ENCODE measurements at regions of chr13 and their contacts with region 1.

Region 1: DNA sequence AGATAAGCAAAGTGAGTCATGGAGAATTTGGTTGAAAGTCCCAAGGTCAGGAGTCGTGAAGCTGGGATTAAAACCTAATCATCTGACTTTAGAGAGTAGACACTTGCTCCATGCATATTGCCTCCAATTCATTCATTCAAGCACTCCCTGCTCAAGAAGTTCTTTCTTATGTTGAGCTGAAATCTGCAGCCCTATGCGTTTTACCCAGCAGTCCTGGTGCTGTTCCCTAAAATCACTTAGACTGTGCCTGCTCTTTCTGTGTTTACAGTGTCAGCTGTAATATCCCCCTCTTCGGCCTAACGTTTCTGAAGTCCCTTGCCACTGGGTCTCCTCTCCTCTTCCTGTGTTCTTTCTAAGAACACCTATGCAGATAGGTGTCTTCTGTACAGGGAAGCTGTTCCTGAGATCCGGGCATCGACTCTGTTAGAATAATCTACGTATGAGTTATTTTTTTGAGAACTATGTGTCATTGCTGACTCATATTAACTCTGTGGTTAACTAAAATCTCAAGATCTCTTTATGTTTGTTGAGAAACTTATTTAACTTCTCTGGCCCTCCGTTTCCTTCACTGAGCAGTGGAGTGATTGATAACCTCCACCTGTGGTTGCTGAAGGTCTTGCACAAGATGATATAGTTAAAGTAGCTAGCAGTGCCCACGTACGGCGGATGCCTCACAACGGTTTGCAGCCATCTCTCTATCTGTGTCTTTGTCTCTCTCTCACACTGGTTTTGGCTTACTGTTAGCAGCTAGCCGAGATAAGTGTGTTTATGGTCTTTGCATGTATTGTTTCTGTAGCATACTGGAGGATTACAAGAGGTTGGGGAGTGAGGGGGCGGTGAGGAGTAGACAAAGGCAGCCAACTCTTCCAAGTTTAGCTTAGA is 4.7 kb downstream of the ALOX5AP start:
- DNase-seq: peak; percentile 76
- ATAC-seq: peak; percentile 54
- H3K4me3 ChIP-seq: peak overlapping the region; percentile 42
- H3K27ac ChIP-seq: no peak overlapping the region
- H3K4me1 ChIP-seq: peaks cover 60% of the 10 kb centered on the region
- H3K27me3 ChIP-seq: no peaks in the 10 kb centered on the region
- CTCF ChIP-seq: no peak
- EP300 ChIP-seq: peak in 1 of 2 experiments; percentile 39; a peak in 2 of 4 replicates
- POLR2A ChIP-seq: no peak
- RAD21 ChIP-seq: peak; percentile 32; the same call in 1 of the 2 replicates

Region 2: DNA sequence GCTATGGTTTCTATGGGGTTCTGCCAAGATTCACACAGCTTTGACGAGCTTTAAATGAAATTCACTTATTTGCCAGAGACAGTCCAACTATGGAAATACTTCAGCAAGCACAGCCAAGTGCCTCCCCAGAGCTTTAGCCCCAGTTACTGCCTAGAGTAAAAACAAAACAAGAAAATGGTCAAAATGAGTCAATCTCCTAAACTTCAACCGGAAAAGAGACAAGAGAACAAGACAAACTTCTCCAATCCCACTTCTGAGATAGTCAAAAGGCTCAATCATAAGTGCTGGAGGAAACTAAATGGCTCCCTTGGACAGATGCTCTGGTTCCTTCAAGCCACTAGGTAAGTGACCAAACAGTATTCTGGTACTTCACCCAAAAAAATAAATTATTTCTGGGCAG is 498.5 kb before region 1 on chr13:
- CTCF ChIA-PET with region 1: no interaction called
- POLR2A ChIA-PET with region 1: no interaction called
- RAD21 ChIA-PET with region 1: no interaction called
- SMC1A ChIA-PET with region 1: no interaction called
- in situ Hi-C with region 1: no loop called
- intact Hi-C with region 1: no loop called
- DNase-seq: peak; percentile 56
- ATAC-seq: peak; percentile 93
- H3K4me3 ChIP-seq: no peak overlapping the region
- H3K27ac ChIP-seq: no peak overlapping the region
- H3K4me1 ChIP-seq: peaks cover 2% of the 10 kb centered on the region; the same call in 1 of the 2 replicates
- H3K27me3 ChIP-seq: no peaks in the 10 kb centered on the region
- CTCF ChIP-seq: no peak
- EP300 ChIP-seq: peak in 1 of 2 experiments; percentile 60; a peak in 1 of 4 replicates
- POLR2A ChIP-seq: no peak
- RAD21 ChIP-seq: no peak; the same call in 1 of the 2 replicates

Region 3: GRCh38 chr13:30408319-30409101 is 331.5 kb before region 1 on chr13:
- CTCF ChIA-PET with region 1: no interaction called
- POLR2A ChIA-PET with region 1: no interaction called
- RAD21 ChIA-PET with region 1: no interaction called
- SMC1A ChIA-PET with region 1: no interaction called
- in situ Hi-C with region 1: no loop called
- intact Hi-C with region 1: no loop called
- DNase-seq: no peak
- ATAC-seq: peak; percentile 97
- H3K4me3 ChIP-seq: no peak overlapping the region; the same call in 1 of the 2 replicates
- H3K27ac ChIP-seq: no peak overlapping the region
- H3K4me1 ChIP-seq: peaks cover 6% of the 10 kb centered on the region
- H3K27me3 ChIP-seq: no peaks in the 10 kb centered on the region
- CTCF ChIP-seq: peak; percentile 56 to 86 (median 74)
- EP300 ChIP-seq: 0 out of 4 replicates have a peak, but pooled peaks of 1 of the 2 experiments have one; percentile 22
- POLR2A ChIP-seq: peak; percentile 62
- RAD21 ChIP-seq: peak; percentile 72

Region 4: GRCh38 chr13:30617315-30618185 is 122.5 kb before region 1 on chr13 and contains the start of gene USPL1:
- CTCF ChIA-PET with region 1: no interaction called
- POLR2A ChIA-PET with region 1: interaction called, 6 read pairs
- RAD21 ChIA-PET with region 1: interaction called, 16 read pairs
- SMC1A ChIA-PET with region 1: interaction called, 6 read pairs
- in situ Hi-C with region 1: no loop called
- intact Hi-C with region 1: loop called (anchors 2 kb)
- DNase-seq: peak; percentile 96
- ATAC-seq: peak; percentile 91
- H3K4me3 ChIP-seq: peak within 1 kb of the TSS; percentile 91
- H3K27ac ChIP-seq: peak within 1 kb of the TSS; percentile 93
- H3K4me1 ChIP-seq: peaks cover 8% of the 10 kb centered on the region
- H3K27me3 ChIP-seq: no peaks in the 10 kb centered on the region
- CTCF ChIP-seq: peak in 1 of 3 experiments; percentile 6; a peak in 1 of 6 replicates
- EP300 ChIP-seq: peak; percentile 84 to 95
- POLR2A ChIP-seq: peak; percentile 93
- RAD21 ChIP-seq: peak; percentile 17; the same call in 1 of the 2 replicates
- polyA plus RNA-seq, gene USPL1: 7.9 to 8.0 TPM

Region 5: DNA sequence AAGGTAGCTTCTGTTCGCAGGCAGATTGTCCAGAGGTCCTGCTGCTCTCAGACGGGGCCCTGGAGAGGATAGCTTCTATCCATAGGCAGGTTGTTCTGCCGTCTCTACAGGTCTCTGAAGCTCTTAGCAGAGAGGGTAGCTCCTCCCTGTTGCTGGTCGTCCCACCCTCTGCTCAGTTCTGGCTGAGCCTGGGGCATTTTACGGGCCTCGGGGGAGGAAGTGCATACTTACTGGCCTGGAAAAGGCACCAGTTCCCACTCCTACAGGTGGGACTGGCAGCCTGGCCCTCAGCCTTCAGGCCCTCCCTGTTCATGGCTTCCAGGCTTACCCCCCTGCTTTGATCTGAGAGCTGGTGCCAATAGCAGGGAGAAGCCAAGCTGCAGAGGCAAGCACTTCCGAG is 80.0 kb before region 1 on chr13:
- CTCF ChIA-PET with region 1: no interaction called
- POLR2A ChIA-PET with region 1: no interaction called
- RAD21 ChIA-PET with region 1: interaction called, 7 read pairs
- SMC1A ChIA-PET with region 1: interaction called, 3 read pairs
- in situ Hi-C with region 1: no loop called
- intact Hi-C with region 1: loop called (anchors 1 kb)
- DNase-seq: no peak
- ATAC-seq: no peak
- H3K4me3 ChIP-seq: no peak overlapping the region
- H3K27ac ChIP-seq: no peak overlapping the region
- H3K4me1 ChIP-seq: peaks cover 11% of the 10 kb centered on the region
- H3K27me3 ChIP-seq: no peaks in the 10 kb centered on the region
- CTCF ChIP-seq: no peak
- EP300 ChIP-seq: no peak
- POLR2A ChIP-seq: no peak; the same call in 1 of the 2 replicates
- RAD21 ChIP-seq: no peak

Region 6: DNA sequence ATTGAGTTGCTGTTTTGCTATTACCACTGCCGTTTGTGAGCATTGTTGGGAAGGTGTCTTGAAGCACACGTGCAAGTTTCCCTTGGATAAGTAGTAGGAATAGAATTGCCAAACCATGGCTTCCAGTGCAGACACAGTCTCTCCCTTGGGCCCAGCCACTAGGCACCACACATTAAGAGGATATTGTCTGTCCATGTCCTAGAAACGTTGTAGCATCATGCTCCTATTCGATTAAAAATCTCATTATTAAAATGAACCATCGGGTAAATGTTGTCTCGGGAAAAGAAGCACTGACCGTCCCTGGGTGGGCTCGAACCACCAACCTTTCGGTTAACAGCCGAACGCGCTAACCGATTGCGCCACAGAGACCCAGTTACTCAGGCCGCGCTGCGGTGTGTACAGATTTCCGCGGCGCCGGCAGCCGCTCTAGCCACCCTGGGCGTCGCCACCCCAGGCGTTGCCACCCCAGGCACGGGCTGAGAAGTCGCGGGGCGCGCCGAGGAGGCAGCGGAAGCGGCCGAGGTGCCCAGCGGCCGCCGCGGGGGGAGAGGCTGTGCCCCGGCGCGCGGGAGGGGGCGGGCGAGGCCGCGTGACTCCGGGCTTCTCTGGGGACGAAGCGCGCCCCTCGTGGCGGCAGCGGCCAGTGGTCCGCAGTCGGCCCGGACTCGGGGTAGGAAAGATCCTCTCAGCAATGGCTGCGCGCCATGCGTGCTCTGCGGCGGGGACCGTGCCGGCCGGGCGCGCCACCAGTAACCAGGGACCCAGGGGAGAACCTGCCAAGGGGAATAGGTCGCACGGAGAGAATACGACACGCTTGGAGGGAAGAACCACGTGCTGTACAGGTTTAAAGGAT is 66.1 kb before region 1 on chr13:
- CTCF ChIA-PET with region 1: interaction called, 3 read pairs
- POLR2A ChIA-PET with region 1: no interaction called
- RAD21 ChIA-PET with region 1: interaction called, 4 read pairs
- SMC1A ChIA-PET with region 1: interaction called, 4 read pairs
- in situ Hi-C with region 1: no loop called
- intact Hi-C with region 1: loop called (anchors 2 kb)
- DNase-seq: peak; percentile 67
- ATAC-seq: peak; percentile 99
- H3K4me3 ChIP-seq: peak overlapping the region; percentile 54; the same call in 1 of the 2 replicates
- H3K27ac ChIP-seq: no peak overlapping the region
- H3K4me1 ChIP-seq: no peaks in the 10 kb centered on the region
- H3K27me3 ChIP-seq: no peaks in the 10 kb centered on the region
- CTCF ChIP-seq: peak; percentile 64 to 73 (median 71)
- EP300 ChIP-seq: peak in 1 of 2 experiments; percentile 50; a peak in 1 of 4 replicates
- POLR2A ChIP-seq: peak; percentile 57
- RAD21 ChIP-seq: peak; percentile 41

Region 7: DNA sequence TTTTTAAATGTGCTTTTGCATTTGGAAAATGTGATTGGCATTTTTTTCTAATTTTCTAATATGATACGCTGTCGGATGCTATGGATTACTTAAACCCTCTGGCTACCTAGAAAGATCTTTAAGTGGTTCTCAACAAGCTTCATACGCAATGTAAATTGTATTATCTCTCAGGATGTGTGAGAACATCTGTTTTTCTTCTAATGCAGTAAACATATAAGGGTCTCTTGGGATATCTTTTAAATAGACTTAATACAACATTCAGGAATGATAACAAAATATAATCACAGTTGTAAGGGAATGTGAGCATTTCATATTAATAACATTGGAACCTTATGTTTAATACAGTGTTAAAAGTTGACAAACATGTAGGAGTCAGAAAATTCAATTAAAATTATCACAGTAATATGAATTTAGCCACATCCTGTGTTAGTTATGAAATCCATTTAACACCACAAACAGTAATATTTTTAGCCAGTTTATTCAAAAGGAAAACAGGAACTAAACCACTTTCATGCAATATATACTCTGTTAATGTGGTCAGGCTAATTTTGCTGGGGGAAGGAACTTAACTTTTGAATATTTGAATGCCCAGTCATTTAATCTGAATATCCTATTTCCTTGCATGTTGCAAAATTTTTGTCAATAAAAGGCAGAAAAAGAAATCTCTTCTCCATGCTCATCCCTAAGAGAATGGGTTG is 19.7 kb before region 1 on chr13:
- CTCF ChIA-PET with region 1: interaction called, 7 read pairs
- POLR2A ChIA-PET with region 1: interaction called, 7 read pairs
- RAD21 ChIA-PET with region 1: interaction called, 6 read pairs
- SMC1A ChIA-PET with region 1: interaction called, 28 read pairs
- in situ Hi-C with region 1: no loop called
- intact Hi-C with region 1: loop called (anchors 2 kb)
- DNase-seq: peak; percentile 59
- ATAC-seq: peak; percentile 90
- H3K4me3 ChIP-seq: peak overlapping the region; percentile 27
- H3K27ac ChIP-seq: no peak overlapping the region
- H3K4me1 ChIP-seq: peaks cover 29% of the 10 kb centered on the region
- H3K27me3 ChIP-seq: no peaks in the 10 kb centered on the region
- CTCF ChIP-seq: no peak
- EP300 ChIP-seq: peak; percentile 86 to 89
- POLR2A ChIP-seq: no peak
- RAD21 ChIP-seq: no peak

Region 8: DNA sequence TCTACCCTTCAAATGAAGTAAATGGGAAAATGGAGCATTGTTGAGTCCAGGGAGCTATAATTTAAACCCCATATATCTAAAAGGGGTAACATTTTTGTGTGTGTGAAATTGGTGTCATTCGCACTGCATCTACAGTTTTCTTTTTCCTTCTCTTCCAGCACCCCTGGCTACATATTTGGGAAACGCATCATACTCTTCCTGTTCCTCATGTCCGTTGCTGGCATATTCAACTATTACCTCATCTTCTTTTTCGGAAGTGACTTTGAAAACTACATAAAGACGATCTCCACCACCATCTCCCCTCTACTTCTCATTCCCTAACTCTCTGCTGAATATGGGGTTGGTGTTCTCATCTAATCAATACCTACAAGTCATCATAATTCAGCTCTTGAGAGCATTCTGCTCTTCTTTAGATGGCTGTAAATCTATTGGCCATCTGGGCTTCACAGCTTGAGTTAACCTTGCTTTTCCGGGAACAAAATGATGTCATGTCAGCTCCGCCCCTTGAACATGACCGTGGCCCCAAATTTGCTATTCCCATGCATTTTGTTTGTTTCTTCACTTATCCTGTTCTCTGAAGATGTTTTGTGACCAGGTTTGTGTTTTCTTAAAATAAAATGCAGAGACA is 23.9 kb after region 1 on chr13:
- CTCF ChIA-PET with region 1: interaction called, 3 read pairs
- POLR2A ChIA-PET with region 1: interaction called, 3 read pairs
- RAD21 ChIA-PET with region 1: interaction called, 13 read pairs
- SMC1A ChIA-PET with region 1: interaction called, 12 read pairs
- in situ Hi-C with region 1: no loop called
- intact Hi-C with region 1: loop called (anchors 2 kb)
- DNase-seq: no peak
- ATAC-seq: no peak
- H3K4me3 ChIP-seq: no peak overlapping the region
- H3K27ac ChIP-seq: no peak overlapping the region
- H3K4me1 ChIP-seq: peaks cover 11% of the 10 kb centered on the region
- H3K27me3 ChIP-seq: no peaks in the 10 kb centered on the region
- CTCF ChIP-seq: no peak
- EP300 ChIP-seq: no peak
- POLR2A ChIP-seq: no peak
- RAD21 ChIP-seq: no peak